ENCODE measurements at regions of chr19 and their contacts with region 1.

Region 1: GRCh38 chr19:41859618-41860418 is at the start of gene RPS19:
- DNase-seq: peak; percentile 98
- ATAC-seq: peak; percentile 85
- H3K4me3 Mint-ChIP-seq: peak within 1 kb of the TSS; percentile 94
- H3K27ac Mint-ChIP-seq: peak within 1 kb of the TSS; percentile 97
- H3K4me1 Mint-ChIP-seq: peaks cover 44% of the 10 kb centered on the region
- H3K27me3 Mint-ChIP-seq: no peaks in the 10 kb centered on the region
- CTCF ChIP-seq: no peak
- total RNA-seq, gene RPS19: 4,196 and 4,853 TPM in 2 replicates

Region 2: DNA sequence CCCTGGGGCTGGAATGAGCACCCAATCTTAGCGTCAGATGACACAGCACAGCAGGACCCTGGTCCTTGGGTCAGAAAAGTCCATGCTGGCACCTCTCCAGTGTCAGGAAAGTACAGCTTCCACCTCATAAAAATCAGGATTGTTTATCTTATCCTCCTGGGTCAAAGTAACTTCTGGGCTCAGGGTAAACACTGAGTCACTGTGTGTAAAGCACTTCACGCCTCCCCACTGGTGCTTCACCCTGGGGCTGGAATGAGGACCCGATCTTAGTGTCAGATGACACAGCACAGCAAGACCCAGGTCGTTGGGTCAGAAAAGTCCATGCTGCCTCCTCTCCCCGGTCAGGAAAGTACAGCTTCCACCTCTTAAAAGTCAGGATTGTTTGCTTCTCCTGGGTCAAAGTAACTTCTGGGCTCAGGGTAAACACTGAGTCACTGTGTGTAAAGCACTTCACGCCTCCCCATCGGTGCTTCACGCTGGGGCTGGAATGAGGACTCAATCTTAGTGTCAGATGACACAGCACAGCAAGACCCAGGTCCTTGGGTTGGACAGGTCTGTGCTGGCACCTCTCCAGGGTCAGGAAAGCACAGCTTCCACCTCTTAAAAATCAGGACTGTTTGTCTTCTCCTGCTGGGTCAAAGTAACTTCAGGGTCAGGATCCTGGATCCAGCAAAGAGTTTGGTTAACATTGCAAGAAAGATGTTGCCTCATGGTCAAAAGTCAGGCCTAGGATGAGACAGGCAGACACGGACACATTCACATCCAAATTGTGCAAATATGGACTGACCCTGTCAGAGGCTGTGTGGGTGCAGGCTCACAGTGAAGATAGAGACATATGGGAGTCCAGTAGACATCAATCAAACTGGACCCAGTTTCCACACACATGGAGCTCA is 938.6 kb before region 1 on chr19:
- CTCF ChIA-PET with region 1: no interaction called
- POLR2A ChIA-PET with region 1: no interaction called
- intact Hi-C with region 1: no loop called
- DNase-seq: no peak
- ATAC-seq: no peak
- H3K4me3 Mint-ChIP-seq: no peak overlapping the region
- H3K27ac Mint-ChIP-seq: no peak overlapping the region
- H3K4me1 Mint-ChIP-seq: no peaks in the 10 kb centered on the region
- H3K27me3 Mint-ChIP-seq: peaks cover 9% of the 10 kb centered on the region
- CTCF ChIP-seq: no peak

Region 3: GRCh38 chr19:41928221-41928683 is 68.4 kb after region 1 on chr19 and contains the start of gene ERFL:
- CTCF ChIA-PET with region 1: interaction called, 5 read pairs
- POLR2A ChIA-PET with region 1: interaction called, 25 read pairs
- intact Hi-C with region 1: no loop called
- DNase-seq: no peak
- ATAC-seq: peak; percentile 35
- H3K4me3 Mint-ChIP-seq: no peak within 1 kb of the TSS
- H3K27ac Mint-ChIP-seq: peak within 1 kb of the TSS; percentile 73
- H3K4me1 Mint-ChIP-seq: peaks cover 35% of the 10 kb centered on the region
- H3K27me3 Mint-ChIP-seq: peaks cover 2% of the 10 kb centered on the region
- CTCF ChIP-seq: no peak
- total RNA-seq, gene ERFL: 0.64 and 1.1 TPM in 2 replicates

Region 4: DNA sequence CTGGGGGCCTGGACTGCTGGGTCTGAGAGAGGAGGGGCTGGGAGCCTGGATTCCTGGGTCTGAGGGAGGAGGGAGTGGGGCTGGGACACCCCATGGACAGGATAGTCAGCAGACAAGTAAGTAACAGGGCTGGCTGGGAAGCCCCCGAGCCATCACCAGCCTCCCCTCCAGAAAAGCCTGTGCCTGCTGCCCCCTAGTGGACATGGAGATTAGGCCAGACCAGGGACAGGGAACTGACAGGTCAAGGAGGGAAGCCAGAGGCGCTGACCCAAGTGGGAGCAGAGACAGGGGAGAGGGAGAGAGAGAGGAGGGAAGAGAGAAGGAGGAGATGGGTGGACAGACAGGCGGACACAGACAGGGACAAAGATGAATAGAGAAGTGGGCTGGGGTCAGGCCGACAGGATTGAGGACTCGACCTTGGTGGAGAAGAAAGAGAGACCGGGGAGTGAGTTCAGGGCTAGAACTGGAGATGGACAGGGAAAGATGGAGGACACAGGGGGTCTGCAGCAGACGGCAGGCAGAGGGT is 75.1 kb after region 1 on chr19:
- CTCF ChIA-PET with region 1: interaction called, 3 read pairs
- POLR2A ChIA-PET with region 1: interaction called, 25 read pairs
- intact Hi-C with region 1: loop called (anchors 1 kb)
- DNase-seq: peak; percentile 65
- ATAC-seq: peak; percentile 84
- H3K4me3 Mint-ChIP-seq: no peak overlapping the region
- H3K27ac Mint-ChIP-seq: peak overlapping the region; percentile 79
- H3K4me1 Mint-ChIP-seq: peaks cover 63% of the 10 kb centered on the region
- H3K27me3 Mint-ChIP-seq: no peaks in the 10 kb centered on the region
- CTCF ChIP-seq: no peak

Region 5: DNA sequence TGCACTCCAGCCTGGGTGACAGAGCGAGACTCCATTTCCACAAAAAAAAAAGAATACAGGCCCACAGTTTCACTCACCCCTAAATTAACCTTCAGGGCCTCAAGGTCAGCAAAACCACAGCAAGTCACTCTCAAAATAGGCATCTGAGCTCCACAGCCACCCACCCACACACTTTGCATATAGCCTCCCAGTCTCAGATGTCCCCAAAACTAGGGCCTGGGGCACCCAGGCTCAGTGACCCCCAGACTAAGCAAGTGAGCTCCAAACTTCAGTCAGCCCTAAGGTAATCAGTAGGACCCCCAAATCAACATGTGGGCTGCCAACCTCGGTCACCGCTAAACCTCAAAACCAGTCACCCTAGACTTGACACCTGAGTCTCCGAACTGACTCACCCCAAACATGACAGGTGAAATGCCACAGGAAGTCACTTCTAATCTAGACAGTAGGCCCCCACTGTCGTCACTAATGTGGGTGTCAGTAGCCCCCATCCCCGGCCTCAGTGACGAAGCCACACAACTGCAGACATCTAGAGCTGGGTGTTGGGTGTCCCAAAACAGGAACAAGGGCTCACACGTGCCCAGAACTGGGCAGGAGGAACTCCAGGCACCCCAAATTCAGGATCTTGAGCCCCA is 85.4 kb after region 1 on chr19:
- CTCF ChIA-PET with region 1: interaction called, 15 read pairs
- POLR2A ChIA-PET with region 1: interaction called, 49 read pairs
- intact Hi-C with region 1: loop called (anchors 1 kb)
- DNase-seq: peak; percentile 67
- ATAC-seq: peak; percentile 82
- H3K4me3 Mint-ChIP-seq: peak overlapping the region; percentile 72
- H3K27ac Mint-ChIP-seq: peak overlapping the region; percentile 98
- H3K4me1 Mint-ChIP-seq: peaks cover 73% of the 10 kb centered on the region
- H3K27me3 Mint-ChIP-seq: no peaks in the 10 kb centered on the region
- CTCF ChIP-seq: no peak

Region 6: DNA sequence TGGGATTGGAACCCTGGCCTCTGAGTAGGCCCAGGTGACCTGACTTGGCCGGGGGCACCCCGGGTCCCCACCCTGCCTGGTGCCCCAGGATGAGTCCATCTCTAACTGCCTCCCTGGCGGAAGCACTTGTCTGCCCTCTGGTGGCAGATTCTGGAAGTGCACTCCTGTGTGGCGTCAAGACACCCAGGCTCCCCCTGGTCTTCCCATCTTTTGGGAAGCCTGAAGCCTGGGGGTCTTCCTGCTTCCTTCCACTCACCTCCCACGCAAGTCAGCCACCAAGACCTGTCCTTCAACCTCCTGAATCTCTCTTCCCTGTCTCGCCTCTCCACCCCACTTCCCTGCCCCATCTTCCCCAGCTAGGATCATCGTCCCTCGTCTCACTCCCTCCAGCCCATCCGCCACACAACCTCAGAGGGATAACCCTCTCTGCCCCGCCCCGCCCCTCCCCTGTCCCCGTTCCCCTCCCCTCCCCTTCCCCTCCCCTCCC is 91.9 kb after region 1 on chr19:
- CTCF ChIA-PET with region 1: interaction called, 17 read pairs
- POLR2A ChIA-PET with region 1: interaction called, 49 read pairs
- intact Hi-C with region 1: loop called (anchors 1 kb)
- DNase-seq: peak; percentile 86
- ATAC-seq: peak; percentile 99
- H3K4me3 Mint-ChIP-seq: no peak overlapping the region
- H3K27ac Mint-ChIP-seq: peak overlapping the region; percentile 41
- H3K4me1 Mint-ChIP-seq: peaks cover 29% of the 10 kb centered on the region
- H3K27me3 Mint-ChIP-seq: no peaks in the 10 kb centered on the region
- CTCF ChIP-seq: peak; percentile 92

Region 7: DNA sequence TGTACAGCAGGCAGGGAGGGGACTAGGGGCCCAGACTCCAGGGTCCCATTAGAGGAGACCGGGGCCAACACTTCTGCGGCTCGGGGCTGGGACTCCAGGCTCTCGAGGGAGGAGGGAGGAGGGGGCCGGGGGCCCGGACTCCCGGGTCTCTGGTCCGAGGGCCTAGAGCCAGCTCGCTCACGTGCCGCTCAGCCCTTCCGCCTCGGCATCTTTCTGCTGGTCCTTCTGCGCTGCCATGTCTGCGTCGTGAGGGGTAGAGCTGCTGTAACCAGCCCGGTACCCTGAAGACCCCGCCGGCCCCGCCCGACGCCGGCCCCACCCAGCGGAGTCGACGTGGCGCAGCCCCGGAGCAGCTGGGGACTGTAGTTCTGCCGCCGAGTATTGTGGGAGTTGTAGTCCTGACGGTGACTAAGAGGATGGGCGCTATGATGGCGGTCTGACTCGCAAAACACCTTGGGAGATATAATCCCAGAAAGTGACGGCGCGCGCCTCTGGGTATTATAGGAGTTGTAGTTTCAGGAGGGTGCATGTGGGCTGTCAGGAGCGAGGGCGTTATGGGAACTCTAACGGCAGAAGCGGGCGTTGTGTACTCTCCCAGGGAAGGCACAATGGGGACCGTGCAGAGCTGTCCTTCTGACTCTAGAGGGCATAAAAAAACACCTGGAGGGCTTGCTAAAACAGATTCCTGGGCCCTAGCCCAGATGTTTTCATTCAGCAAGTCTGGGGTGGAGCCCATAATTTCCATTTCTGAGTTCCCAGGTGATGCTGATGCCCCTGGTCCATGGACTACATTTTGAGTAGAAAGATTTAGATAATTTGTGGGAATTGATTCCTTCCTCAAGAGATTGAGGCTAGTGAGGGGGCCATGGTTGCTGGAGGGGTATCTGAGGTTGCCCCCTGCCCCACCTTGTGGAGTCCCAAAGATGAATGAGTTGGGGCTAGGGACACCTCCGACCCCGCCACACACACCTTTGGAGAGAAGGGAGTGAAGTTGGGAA is 99.5 kb after region 1 on chr19 and contains the start of gene RABAC1:
- CTCF ChIA-PET with region 1: interaction called, 12 read pairs
- POLR2A ChIA-PET with region 1: interaction called, 38 read pairs
- intact Hi-C with region 1: loop called (anchors 1 kb)
- DNase-seq: peak; percentile 79
- ATAC-seq: peak; percentile 91
- H3K4me3 Mint-ChIP-seq: peak within 1 kb of the TSS; percentile 90
- H3K27ac Mint-ChIP-seq: peak within 1 kb of the TSS; percentile 90
- H3K4me1 Mint-ChIP-seq: peaks cover 17% of the 10 kb centered on the region
- H3K27me3 Mint-ChIP-seq: no peaks in the 10 kb centered on the region
- CTCF ChIP-seq: no peak
- total RNA-seq, gene RABAC1: 96.7 and 102 TPM in 2 replicates

Region 8: DNA sequence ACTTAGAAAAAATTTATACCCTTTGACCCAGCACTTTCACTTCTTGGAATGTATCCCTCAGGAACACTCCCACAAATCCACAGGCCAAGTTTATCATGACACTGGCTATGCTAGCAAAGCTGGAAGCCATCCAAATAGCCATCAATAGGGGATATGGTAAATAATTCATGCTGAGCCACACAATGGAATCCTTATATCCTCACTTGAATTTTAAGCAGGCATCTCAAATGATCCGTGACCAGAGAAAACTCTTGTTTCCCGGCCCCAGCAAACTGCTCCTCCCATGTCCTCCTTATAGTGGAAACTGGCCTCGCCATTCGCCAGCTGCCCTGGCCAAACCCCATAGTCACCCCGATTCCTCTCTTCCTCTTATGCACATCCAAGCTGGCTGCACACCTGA is 172.6 kb after region 1 on chr19:
- CTCF ChIA-PET with region 1: interaction called, 4 read pairs
- POLR2A ChIA-PET with region 1: no interaction called
- intact Hi-C with region 1: loop called (anchors 1 kb)
- DNase-seq: no peak
- ATAC-seq: no peak
- H3K4me3 Mint-ChIP-seq: no peak overlapping the region
- H3K27ac Mint-ChIP-seq: no peak overlapping the region
- H3K4me1 Mint-ChIP-seq: peaks cover 4% of the 10 kb centered on the region
- H3K27me3 Mint-ChIP-seq: peaks cover 14% of the 10 kb centered on the region
- CTCF ChIP-seq: no peak